ENCODE measurements at regions of chr1 and their contacts with region 1.

Region 1: DNA sequence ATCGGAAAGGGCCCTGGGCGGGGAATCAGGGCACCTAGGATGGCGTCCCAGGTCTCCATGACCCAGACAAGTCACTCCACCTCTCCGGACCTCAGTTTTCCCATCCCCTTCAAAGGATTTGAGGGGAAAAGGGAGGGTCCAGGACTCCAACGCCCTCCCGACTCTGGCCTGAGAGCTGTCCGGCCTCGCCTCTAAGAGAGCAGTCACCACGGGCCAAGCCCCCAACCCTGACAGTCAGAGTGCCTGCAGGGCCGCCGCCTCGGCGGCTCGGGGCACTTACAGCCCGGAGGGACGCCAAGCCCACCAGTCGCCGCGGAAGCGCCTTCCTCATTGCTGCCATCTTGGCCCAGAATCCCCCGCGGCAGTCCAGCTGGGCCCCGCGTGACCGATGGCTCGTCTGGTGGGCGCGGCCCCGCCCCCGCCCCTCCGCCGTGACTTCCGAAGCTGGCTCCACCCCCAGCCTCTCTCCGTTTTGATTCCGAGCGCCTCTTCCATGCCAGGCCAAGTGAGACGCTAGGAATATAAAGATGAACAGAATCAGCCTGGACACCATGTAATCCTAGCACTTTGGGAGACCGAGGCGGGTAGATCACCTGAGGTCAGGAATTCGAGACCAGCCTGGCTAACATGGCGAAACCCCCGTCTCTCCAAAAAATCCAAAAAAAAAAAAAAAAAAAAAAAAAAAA is at the start of gene HMGCL:
- DNase-seq: peak; percentile 72 to 94 (median 83)
- ATAC-seq: peak; percentile 94
- H3K4me3 ChIP-seq: peak within 1 kb of the TSS; percentile 93
- H3K4me3 Mint-ChIP-seq: peak within 1 kb of the TSS; percentile 96
- H3K27ac ChIP-seq: peak within 1 kb of the TSS; percentile 84 to 92
- H3K27ac Mint-ChIP-seq: peak within 1 kb of the TSS; percentile 96
- H3K4me1 ChIP-seq: peaks cover 15% of the 10 kb centered on the region
- H3K4me1 Mint-ChIP-seq: peaks cover 20% of the 10 kb centered on the region
- H3K27me3 ChIP-seq: no peaks in the 10 kb centered on the region
- H3K27me3 Mint-ChIP-seq: no peaks in the 10 kb centered on the region
- CTCF ChIP-seq: no peak
- total RNA-seq, gene HMGCL: 8.9 to 9.6 TPM

Region 2: GRCh38 chr1:23521588-23521987 is 303.6 kb before region 1 on chr1:
- CTCF ChIA-PET with region 1: no interaction called
- POLR2A ChIA-PET with region 1: no interaction called
- intact Hi-C with region 1: no loop called
- DNase-seq: no peak
- ATAC-seq: no peak
- H3K4me3 ChIP-seq: no peak overlapping the region
- H3K4me3 Mint-ChIP-seq: no peak overlapping the region
- H3K27ac ChIP-seq: no peak overlapping the region
- H3K27ac Mint-ChIP-seq: no peak overlapping the region
- H3K4me1 ChIP-seq: peaks cover 32% of the 10 kb centered on the region
- H3K4me1 Mint-ChIP-seq: peaks cover 40% of the 10 kb centered on the region
- H3K27me3 ChIP-seq: no peaks in the 10 kb centered on the region
- H3K27me3 Mint-ChIP-seq: no peaks in the 10 kb centered on the region
- CTCF ChIP-seq: no peak

Region 3: DNA sequence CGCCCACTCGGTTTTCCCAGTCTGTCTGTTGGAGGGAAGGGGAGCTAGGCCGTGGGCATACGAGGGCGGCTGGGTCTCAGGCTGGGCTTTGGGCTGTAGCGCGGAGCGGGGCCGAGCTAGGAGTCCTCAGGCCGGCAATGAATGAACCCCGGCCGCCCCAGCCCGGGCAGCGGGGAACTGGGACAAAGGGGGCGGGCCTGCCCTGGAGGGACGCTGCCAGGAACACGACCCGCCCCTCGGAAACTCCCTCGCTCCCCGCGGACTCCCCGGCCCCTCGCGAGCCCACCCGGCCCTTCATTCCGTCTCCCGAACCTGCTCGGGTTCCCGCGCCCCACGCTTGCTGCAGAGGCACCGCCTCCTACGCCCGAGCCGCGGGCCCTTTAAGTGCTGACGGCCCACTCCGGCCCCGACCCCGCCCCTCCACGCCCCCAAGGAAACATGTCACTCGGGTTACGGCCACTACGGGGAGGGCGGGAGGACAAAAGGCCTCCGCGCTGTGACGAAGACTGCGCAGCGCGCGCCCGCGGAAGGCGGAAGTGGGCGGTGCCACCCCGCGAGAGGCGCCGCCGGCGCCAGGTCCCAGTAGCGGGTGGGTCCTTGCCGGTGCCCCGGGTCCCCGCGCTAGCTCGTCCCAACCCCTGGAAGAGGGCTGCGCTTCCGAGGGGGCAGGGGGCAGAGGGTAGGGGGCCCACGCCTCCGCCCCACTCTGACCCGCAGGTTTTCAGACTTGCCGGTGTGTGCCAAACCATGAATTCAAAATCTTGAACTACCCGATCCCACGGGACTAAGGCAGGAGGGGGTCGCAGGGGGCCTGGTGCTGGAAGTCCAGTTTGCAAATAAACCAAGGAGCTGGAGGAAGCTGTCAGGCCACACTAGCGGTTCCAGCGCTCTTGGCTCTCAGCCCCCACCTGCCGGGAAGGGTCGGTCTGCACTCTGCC is 24.6 kb before region 1 on chr1 and contains the start of gene GALE:
- CTCF ChIA-PET with region 1: interaction called, 3 read pairs
- POLR2A ChIA-PET with region 1: interaction called, 32 read pairs
- intact Hi-C with region 1: loop called in 1 of 2 experiments (anchors 2 kb)
- DNase-seq: peak; percentile 94 to 99 (median 97)
- ATAC-seq: peak; percentile 90
- H3K4me3 ChIP-seq: peak within 1 kb of the TSS; percentile 81
- H3K4me3 Mint-ChIP-seq: peak within 1 kb of the TSS; percentile 97
- H3K27ac ChIP-seq: peak within 1 kb of the TSS; percentile 78 to 82
- H3K27ac Mint-ChIP-seq: peak within 1 kb of the TSS; percentile 92
- H3K4me1 ChIP-seq: peaks cover 27% of the 10 kb centered on the region
- H3K4me1 Mint-ChIP-seq: peaks cover 14% of the 10 kb centered on the region
- H3K27me3 ChIP-seq: no peaks in the 10 kb centered on the region
- H3K27me3 Mint-ChIP-seq: no peaks in the 10 kb centered on the region
- CTCF ChIP-seq: no peak
- total RNA-seq, gene GALE: 5.4 to 6.9 TPM

Region 4: DNA sequence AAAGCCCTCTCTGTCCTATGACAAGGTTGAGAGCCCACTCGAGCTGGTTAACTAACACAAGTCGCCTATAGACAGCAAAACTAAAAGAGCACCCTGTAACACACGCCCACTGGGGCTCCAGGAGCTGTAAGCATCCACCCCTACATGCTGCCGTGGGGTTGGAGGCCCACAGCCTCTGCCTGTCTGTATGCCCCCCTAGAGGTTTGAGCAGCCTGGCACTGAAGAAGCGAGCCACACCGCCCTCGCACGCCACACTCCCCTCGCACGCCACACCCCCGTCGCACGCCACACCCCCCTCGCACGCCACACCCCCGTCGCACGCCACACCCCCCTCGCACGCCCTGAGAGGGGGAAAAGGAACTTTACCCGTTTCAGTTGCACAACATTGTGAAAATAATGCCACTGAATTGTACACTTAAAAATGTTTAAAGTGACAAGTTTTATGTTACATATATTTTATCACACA is 13.2 kb after region 1 on chr1:
- CTCF ChIA-PET with region 1: no interaction called
- POLR2A ChIA-PET with region 1: interaction called, 17 read pairs
- intact Hi-C with region 1: loop called in 1 of 2 experiments (anchors 1 kb)
- DNase-seq: peak; percentile 63 to 89 (median 70)
- ATAC-seq: peak; percentile 99
- H3K4me3 ChIP-seq: peak overlapping the region; percentile 38
- H3K4me3 Mint-ChIP-seq: peak overlapping the region; percentile 65
- H3K27ac ChIP-seq: no peak overlapping the region
- H3K27ac Mint-ChIP-seq: no peak overlapping the region
- H3K4me1 ChIP-seq: peaks cover 10% of the 10 kb centered on the region
- H3K4me1 Mint-ChIP-seq: peaks cover 12% of the 10 kb centered on the region
- H3K27me3 ChIP-seq: no peaks in the 10 kb centered on the region
- H3K27me3 Mint-ChIP-seq: peaks cover 11% of the 10 kb centered on the region
- CTCF ChIP-seq: no peak

Region 5: DNA sequence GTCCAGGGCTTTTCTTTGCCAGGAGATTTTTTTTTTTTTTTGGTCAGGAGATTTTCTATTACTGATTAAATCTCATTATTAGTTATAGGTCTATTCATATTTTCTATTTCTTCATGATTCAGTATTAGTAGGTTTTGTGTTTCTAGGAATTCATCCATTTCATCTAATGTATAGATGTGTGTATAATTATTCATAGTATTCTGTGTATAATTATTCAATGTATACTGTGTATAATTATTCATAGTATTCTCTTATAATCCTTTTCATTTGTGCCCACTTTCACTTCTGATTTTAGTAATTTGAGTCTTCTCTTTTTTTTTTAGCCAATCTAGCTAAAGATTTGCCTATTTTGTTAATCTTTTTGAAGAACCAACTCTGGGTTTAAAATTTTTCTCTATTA is 122.1 kb after region 1 on chr1:
- CTCF ChIA-PET with region 1: no interaction called
- POLR2A ChIA-PET with region 1: no interaction called
- intact Hi-C with region 1: no loop called
- DNase-seq: no peak
- ATAC-seq: no peak
- H3K4me3 ChIP-seq: no peak overlapping the region
- H3K4me3 Mint-ChIP-seq: no peak overlapping the region
- H3K27ac ChIP-seq: no peak overlapping the region
- H3K27ac Mint-ChIP-seq: no peak overlapping the region
- H3K4me1 ChIP-seq: no peaks in the 10 kb centered on the region
- H3K4me1 Mint-ChIP-seq: no peaks in the 10 kb centered on the region
- H3K27me3 ChIP-seq: no peaks in the 10 kb centered on the region
- H3K27me3 Mint-ChIP-seq: no peaks in the 10 kb centered on the region
- CTCF ChIP-seq: no peak

Region 6: DNA sequence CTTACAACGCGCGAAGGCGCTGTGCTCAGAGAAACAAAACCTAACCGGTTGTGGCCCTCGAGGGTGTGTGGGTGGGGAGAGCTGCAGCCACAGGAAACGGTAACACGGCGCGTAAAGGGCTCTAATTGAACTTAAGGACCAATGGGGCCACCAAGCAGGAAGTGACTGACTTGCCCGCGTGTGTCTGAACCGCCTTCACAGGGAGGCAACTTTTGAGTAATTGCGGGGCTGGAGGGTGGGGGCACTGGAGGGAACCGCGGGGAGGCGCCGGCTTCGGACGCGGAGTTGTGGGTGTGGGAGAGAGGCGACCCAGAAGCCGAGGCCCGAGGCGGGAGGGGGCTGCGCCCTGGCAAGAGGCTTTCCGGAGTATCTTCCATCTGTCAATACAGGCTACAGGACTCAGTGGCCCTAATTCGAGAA is 133.8 kb after region 1 on chr1:
- CTCF ChIA-PET with region 1: no interaction called
- POLR2A ChIA-PET with region 1: interaction called, 13 read pairs
- intact Hi-C with region 1: no loop called
- DNase-seq: peak; percentile 78 to 97 (median 84)
- ATAC-seq: peak; percentile 80
- H3K4me3 ChIP-seq: peak overlapping the region; percentile 61
- H3K4me3 Mint-ChIP-seq: peak overlapping the region; percentile 100
- H3K27ac ChIP-seq: peak overlapping the region; percentile 92 to 97
- H3K27ac Mint-ChIP-seq: peak overlapping the region; percentile 100
- H3K4me1 ChIP-seq: peaks cover 20% of the 10 kb centered on the region
- H3K4me1 Mint-ChIP-seq: peaks cover 59% of the 10 kb centered on the region
- H3K27me3 ChIP-seq: no peaks in the 10 kb centered on the region
- H3K27me3 Mint-ChIP-seq: no peaks in the 10 kb centered on the region
- CTCF ChIP-seq: no peak